A549 (cell line): ENCODE measurements at regions of chr2 and their contacts with region 1.

Region 1: DNA sequence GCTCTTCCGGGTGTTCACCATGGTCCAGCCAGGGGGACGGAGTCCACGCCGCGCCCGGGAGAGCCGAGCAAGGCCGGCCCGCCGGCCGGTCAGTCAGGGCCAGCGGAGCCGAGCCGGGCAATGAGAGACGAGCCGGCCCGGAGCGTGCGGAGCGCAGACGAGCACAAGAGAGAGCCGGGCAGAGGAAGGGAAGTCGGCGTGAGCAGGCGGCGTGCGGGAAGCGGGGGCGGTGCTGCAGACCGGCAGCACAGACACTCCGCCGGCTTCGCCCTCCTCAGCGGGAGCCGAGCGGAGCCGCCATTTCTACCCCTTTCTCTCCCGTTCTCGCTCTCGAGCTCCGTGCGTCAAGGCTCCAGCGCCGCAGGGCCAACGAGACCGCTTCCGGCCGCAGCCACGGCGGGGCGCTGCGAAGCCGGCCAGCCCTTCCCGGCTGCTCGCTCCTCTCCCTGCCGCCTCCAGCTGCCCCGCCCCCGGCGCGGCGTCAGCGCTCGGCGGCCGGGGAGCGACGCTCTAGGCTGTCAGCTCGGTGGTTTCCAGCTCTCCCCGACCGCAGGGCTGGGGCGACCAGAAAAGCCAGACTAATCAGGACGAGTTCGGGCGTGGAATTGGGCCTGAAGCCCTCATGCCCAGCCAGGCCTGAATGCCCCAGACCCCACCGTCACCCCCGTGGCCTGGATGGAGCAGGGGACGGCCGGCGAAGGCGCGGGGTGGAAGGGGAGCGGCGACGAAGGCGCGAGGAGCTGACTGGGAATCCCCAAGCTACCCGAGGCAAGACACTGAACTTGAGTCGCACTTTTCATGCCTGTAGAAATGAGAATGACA is at the start of gene ATAD2B:
- DNase-seq: peak; percentile 90 to 97
- ATAC-seq: peak; percentile 89 to 96
- H3K4me3 ChIP-seq: peak within 1 kb of the TSS; percentile 75
- H3K27ac ChIP-seq: peak within 1 kb of the TSS; percentile 93 to 95
- H3K4me1 ChIP-seq: peaks cover 20% of the 10 kb centered on the region; the same call in 2 of the 3 replicates
- CTCF ChIP-seq: peak; percentile 96
- EP300 ChIP-seq: no peak
- POLR2A ChIP-seq: peak; percentile 80
- RAD21 ChIP-seq: peak; percentile 77 to 93
- polyA plus RNA-seq, gene ATAD2B: 8.7 and 13.1 TPM in 2 replicates

Region 2: DNA sequence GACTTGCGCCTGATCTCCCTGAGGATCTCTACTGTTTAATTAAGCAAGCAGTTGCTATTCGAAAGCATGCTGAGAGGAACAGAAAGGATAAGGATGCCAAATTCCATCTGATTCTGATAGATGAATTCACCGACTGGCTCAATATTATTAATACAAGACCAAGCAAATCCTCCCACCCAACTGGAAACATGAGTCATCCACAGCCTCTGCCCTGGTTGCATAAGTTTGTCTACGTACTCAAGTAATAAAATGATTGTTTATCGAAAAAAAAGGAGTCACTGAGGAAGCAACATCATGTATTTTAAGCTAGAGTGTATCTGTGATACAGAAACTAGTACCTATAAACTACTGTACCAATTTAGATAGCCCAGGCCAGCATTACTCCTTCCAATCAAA is 26.0 kb before region 1 on chr2:
- CTCF ChIA-PET with region 1: interaction called, 18 read pairs
- POLR2A ChIA-PET with region 1: interaction called, 3 read pairs
- DNase-seq: peak in 1 of 2 experiments; percentile 59
- ATAC-seq: peak; percentile 52 to 63
- H3K4me3 ChIP-seq: peak overlapping the region; percentile 27; the same call in 1 of the 3 replicates
- H3K27ac ChIP-seq: peak overlapping the region; percentile 32 to 66
- H3K4me1 ChIP-seq: peaks cover 47% of the 10 kb centered on the region
- CTCF ChIP-seq: no peak
- EP300 ChIP-seq: no peak
- POLR2A ChIP-seq: no peak
- RAD21 ChIP-seq: no peak

Region 3: DNA sequence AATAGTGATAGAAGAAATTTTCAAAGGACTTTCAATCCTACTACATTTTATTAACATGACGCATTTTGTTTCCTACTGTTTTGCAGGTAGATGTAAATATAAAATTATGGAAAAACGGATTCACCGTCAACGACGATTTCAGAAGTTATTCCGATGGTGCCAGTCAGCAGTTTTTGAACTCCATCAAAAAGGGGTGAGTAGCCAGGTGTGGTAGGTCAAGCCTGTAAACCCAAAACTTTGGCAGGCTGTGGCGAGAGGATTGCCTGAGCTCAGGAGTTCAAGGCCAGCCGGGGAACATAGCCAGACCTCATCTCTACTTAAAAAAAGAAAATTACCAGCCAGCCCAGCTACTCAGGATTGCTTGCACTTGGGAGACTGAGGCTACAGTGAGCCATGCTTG is 49.9 kb after region 1 on chr2:
- CTCF ChIA-PET with region 1: interaction called, 16 read pairs
- POLR2A ChIA-PET with region 1: interaction called, 6 read pairs
- DNase-seq: no peak
- ATAC-seq: no peak
- H3K4me3 ChIP-seq: no peak overlapping the region
- H3K27ac ChIP-seq: no peak overlapping the region
- H3K4me1 ChIP-seq: no peaks in the 10 kb centered on the region
- CTCF ChIP-seq: no peak
- EP300 ChIP-seq: no peak
- POLR2A ChIP-seq: no peak
- RAD21 ChIP-seq: no peak

Region 4: DNA sequence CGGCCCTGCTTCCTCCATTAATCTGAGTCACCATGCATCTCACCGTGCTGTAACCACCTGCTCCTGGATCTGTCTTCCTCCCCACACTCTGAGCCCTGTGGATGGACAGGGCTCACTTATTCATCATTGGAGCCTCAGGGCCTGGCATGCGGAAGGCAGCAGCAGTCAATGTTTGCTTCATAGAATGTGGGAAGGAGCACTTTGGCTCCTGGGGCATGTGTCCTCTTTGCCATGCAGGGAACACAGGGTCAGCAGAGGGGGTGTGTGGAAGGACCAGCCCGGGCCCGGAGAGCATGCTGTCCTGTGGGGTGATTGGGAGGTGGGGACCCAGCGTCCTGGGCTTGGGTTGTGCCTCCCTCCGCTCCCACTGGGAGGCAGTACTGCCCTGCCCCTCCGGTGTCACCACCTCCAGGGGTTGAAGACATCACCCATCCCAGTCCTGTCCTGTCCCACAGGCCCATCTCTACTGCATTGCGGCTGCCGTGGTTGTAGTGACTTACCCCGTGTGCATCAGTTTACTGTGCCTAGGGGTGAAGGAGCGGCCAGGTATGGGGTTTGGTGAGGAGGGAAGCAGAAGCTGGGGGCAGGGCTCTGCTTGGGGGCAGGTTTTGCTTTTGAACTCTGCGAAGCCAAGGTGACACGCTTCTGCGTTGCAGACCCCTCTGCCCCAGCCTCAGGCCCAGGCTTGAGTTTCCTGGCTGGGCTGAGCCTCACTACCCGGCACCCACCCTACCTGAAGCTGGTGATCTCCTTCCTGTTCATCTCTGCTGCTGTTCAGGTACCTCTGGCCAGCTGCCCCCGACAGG is 94.4 kb after region 1 on chr2:
- CTCF ChIA-PET with region 1: interaction called, 43 read pairs
- POLR2A ChIA-PET with region 1: interaction called, 19 read pairs
- DNase-seq: peak; percentile 35 to 57
- ATAC-seq: peak; percentile 45 to 77
- H3K4me3 ChIP-seq: no peak overlapping the region
- H3K27ac ChIP-seq: peak overlapping the region; percentile 45 to 60; a peak in 5 of 6 replicates
- H3K4me1 ChIP-seq: peaks cover 47% of the 10 kb centered on the region
- CTCF ChIP-seq: peak; percentile 41
- EP300 ChIP-seq: no peak
- POLR2A ChIP-seq: no peak
- RAD21 ChIP-seq: peak; percentile 52 to 70; a peak in 4 of 5 replicates

Region 5: DNA sequence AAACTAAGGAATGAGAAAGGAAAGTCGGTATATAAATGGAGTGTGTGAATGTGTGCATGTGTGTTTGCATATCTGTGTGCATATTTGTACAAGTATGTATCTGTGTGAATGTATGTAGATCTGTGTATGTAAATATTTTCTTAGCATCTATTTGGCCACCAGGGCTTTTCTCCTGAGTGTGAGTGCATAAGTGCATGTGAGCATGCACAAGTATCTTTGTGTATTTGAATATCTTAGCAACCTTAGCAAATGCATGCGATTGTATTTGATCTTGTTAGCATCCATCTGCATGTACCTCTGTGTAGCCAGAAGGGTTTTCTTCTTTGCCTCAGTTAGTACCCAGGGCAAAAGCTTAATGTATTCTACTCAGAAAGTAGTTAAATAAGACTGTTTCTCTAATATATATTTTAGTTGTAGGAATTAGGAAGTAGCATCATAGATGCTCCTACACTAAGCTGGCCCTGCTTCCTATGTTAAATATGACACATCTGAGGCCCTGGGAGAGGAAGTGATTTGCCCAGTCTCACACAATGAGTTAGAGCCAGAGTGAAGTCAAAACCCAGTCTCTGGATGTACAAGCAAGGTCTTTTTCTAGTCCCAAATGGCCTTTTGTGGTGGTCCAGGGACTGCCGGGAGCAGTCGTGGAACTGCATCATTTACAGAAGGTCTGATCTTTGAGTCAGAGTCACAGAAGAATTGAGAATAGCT is 131.8 kb after region 1 on chr2:
- CTCF ChIA-PET with region 1: interaction called, 25 read pairs
- POLR2A ChIA-PET with region 1: no interaction called
- DNase-seq: no peak
- ATAC-seq: peak in 1 of 2 experiments; percentile 25; a peak in 2 of 6 replicates
- H3K4me3 ChIP-seq: no peak overlapping the region
- H3K27ac ChIP-seq: no peak overlapping the region
- H3K4me1 ChIP-seq: peaks cover 7% of the 10 kb centered on the region; the same call in 1 of the 3 replicates
- CTCF ChIP-seq: no peak
- EP300 ChIP-seq: no peak
- POLR2A ChIP-seq: no peak
- RAD21 ChIP-seq: no peak

Region 6: DNA sequence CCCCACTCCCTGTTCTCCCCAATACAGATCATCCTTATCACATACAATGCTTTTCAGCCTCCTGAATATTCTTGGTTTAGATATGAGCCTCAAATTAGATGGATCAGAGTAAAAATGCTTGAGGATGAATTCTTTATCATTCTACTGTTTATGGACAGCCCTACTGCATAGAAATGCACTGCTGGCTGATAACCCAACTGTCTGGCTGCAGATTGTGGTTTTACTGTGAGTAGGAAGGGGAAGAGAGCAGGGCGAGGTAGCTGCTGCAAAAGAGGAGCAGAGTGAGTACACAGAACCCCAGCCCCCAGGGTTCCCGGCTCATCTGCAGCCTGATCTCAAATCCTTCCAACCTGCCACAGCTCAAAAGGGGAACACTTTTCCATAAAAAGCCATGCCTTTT is 534.7 kb after region 1 on chr2:
- CTCF ChIA-PET with region 1: no interaction called
- POLR2A ChIA-PET with region 1: no interaction called
- DNase-seq: no peak
- ATAC-seq: peak in 1 of 2 experiments; percentile 46; a peak in 1 of 6 replicates
- H3K4me3 ChIP-seq: no peak overlapping the region
- H3K27ac ChIP-seq: no peak overlapping the region
- H3K4me1 ChIP-seq: peaks cover 4% of the 10 kb centered on the region
- CTCF ChIP-seq: no peak
- EP300 ChIP-seq: no peak
- POLR2A ChIP-seq: no peak
- RAD21 ChIP-seq: no peak